Activated CD4-positive, alpha-beta T cell treated with anti-CD3 and anti-CD28 coated beads for 36 hours (primary cell): ENCODE measurements at regions of chr19 and their contacts with region 1.

Region 1: GRCh38 chr19:14136509-14137281 is at the start of gene ASF1B:
- DNase-seq: peak; percentile 99
- ATAC-seq: peak; percentile 88
- H3K4me3 Mint-ChIP-seq: peak within 1 kb of the TSS; percentile 88
- H3K27ac Mint-ChIP-seq: peak within 1 kb of the TSS; percentile 93
- H3K4me1 Mint-ChIP-seq: peaks cover 43% of the 10 kb centered on the region
- H3K27me3 Mint-ChIP-seq: no peaks in the 10 kb centered on the region
- total RNA-seq, gene ASF1B: 64.6 to 70.4 TPM

Region 2: GRCh38 chr19:13859361-13859880 is 277.3 kb before region 1 on chr19:
- CTCF ChIA-PET with region 1: no interaction called
- POLR2A ChIA-PET with region 1: no interaction called
- intact Hi-C with region 1: no loop called
- DNase-seq: no peak
- ATAC-seq: no peak
- H3K4me3 Mint-ChIP-seq: no peak overlapping the region
- H3K27ac Mint-ChIP-seq: peak overlapping the region; percentile 1
- H3K4me1 Mint-ChIP-seq: peaks cover 29% of the 10 kb centered on the region
- H3K27me3 Mint-ChIP-seq: peaks cover 13% of the 10 kb centered on the region

Region 3: DNA sequence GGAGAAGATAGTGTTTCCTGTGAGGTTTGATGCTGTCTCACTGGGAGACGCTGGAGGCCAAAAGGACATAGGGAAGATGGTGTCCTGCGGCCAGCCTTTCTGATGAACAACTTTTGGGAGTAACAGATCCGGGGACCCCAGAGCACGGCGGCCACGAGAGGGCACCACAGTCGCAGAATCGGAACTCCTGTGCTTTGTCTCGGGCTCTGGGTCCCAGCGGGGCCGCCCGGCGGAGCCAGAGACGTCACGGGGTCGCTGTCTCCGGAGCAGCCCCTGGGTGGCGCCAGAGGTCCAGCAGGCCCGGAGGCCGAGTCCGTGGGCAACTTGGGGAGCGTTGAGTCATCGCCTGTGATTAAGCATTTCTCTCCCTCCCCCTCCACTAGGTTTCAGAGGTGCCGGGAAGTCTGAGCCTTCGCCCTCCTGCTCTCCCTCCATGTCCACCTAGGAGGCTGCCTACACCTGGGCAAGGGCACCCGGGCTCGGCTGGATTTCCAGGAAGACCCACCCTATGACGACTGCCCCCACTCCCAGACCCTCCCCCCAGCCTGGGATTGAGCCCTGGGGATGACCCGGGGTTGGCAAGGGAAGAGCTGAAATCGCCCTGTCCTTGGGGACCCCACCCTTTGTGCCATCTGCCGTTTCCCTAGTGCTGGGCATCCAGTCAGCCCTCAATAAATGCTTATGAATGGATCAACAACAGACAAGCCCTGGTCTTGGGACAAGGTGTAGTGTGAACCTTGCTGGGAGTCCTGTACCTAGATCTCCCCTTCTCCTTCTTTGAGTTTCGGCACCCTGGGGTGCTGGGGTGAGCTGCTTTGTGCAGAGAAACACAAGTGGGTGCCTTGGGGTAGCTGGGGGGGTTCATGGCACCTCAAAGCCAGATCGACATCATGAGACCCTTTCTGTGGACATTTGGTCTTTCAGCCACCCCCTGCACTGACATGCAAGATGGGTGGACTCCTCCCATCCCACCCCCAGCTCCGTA is 256.3 kb before region 1 on chr19:
- CTCF ChIA-PET with region 1: interaction called, 7 read pairs
- POLR2A ChIA-PET with region 1: interaction called, 3 read pairs
- intact Hi-C with region 1: loop called (anchors 1 to 2 kb)
- DNase-seq: peak; percentile 99
- ATAC-seq: peak; percentile 94
- H3K4me3 Mint-ChIP-seq: peak overlapping the region; percentile 49
- H3K27ac Mint-ChIP-seq: peak overlapping the region; percentile 85
- H3K4me1 Mint-ChIP-seq: peaks cover 35% of the 10 kb centered on the region
- H3K27me3 Mint-ChIP-seq: no peaks in the 10 kb centered on the region

Region 4: DNA sequence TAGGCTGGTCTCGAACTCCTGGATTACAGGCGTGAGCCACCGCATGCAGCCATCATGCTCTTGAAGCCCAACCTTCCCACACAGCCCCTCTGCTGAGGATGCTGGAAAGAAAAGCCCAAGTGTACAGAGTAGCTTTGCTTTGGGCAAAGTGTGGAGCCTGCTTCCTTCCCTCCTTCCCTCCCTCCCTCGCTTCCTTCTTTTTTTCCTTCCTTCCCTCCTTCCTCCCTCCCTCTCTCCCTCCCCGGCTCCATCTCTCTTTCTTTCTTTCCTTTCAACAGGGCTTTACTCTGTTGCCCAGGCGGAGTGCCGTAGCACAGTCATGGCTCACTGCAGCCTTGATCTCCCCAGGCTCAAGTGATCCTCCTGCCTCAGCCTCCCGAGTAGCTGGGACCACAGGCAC is 228.0 kb before region 1 on chr19:
- CTCF ChIA-PET with region 1: no interaction called
- POLR2A ChIA-PET with region 1: no interaction called
- intact Hi-C with region 1: no loop called
- DNase-seq: no peak
- ATAC-seq: no peak
- H3K4me3 Mint-ChIP-seq: no peak overlapping the region
- H3K27ac Mint-ChIP-seq: no peak overlapping the region
- H3K4me1 Mint-ChIP-seq: peaks cover 14% of the 10 kb centered on the region
- H3K27me3 Mint-ChIP-seq: no peaks in the 10 kb centered on the region

Region 5: GRCh38 chr19:14081325-14082093 is 55.2 kb before region 1 on chr19:
- CTCF ChIA-PET with region 1: interaction called, 13 read pairs
- POLR2A ChIA-PET with region 1: interaction called, 3 read pairs
- intact Hi-C with region 1: loop called (anchors 1 to 2 kb)
- DNase-seq: peak; percentile 99
- ATAC-seq: peak; percentile 95
- H3K4me3 Mint-ChIP-seq: peak overlapping the region; percentile 90
- H3K27ac Mint-ChIP-seq: peak overlapping the region; percentile 92
- H3K4me1 Mint-ChIP-seq: peaks cover 10% of the 10 kb centered on the region
- H3K27me3 Mint-ChIP-seq: no peaks in the 10 kb centered on the region

Region 6: GRCh38 chr19:14237014-14237941 is 100.6 kb after region 1 on chr19:
- CTCF ChIA-PET with region 1: no interaction called
- POLR2A ChIA-PET with region 1: no interaction called
- intact Hi-C with region 1: no loop called
- DNase-seq: no peak
- ATAC-seq: no peak
- H3K4me3 Mint-ChIP-seq: no peak overlapping the region
- H3K27ac Mint-ChIP-seq: no peak overlapping the region
- H3K4me1 Mint-ChIP-seq: no peaks in the 10 kb centered on the region
- H3K27me3 Mint-ChIP-seq: no peaks in the 10 kb centered on the region

Region 7: DNA sequence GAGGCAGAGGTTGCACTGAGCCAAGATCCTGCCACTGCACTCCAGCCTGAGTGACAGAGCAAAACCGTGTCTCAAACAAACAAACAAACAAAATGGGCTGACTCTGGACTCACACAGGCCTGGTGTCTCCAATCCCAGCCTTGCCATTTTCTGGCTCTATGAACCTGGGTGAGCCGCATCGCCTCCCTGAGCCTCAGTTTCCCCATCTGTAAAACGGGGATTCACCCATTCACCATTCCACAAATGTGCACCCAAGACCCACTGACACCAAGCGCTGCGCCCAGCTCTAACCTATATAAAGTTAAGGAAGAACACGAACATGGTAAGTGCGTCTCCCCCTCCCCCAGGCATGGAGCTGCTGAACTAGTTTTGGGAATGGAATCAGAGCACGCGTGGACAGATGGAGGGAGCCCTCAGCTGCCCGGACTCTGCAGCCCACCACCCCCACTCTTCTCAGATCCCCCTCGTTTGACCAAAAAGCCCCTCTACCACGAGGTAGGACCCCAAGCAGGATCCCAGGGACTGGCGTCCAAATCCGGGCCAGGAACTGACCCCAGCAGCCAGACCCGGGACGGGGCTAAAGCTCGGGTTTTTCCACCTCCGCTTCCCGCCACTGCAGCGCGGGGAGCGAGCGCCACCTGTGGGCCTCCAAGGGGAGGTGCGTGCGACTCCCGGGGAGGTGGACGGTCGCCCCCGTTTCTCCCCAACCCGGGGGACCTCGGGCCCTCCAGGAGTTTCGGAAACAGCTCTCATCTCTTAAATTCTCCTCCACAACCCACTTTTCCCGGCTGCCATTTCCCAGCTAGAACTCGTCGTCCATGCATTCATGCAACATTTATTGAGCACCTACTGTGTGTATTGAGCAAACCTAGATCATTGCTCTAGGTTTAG is 211.5 kb after region 1 on chr19:
- CTCF ChIA-PET with region 1: interaction called, 21 read pairs
- POLR2A ChIA-PET with region 1: no interaction called
- intact Hi-C with region 1: loop called (anchors 1 to 5 kb)
- DNase-seq: peak; percentile 84
- ATAC-seq: peak; percentile 63
- H3K4me3 Mint-ChIP-seq: peak overlapping the region; percentile 56
- H3K27ac Mint-ChIP-seq: peak overlapping the region; percentile 80
- H3K4me1 Mint-ChIP-seq: peaks cover 24% of the 10 kb centered on the region
- H3K27me3 Mint-ChIP-seq: no peaks in the 10 kb centered on the region

Region 8: DNA sequence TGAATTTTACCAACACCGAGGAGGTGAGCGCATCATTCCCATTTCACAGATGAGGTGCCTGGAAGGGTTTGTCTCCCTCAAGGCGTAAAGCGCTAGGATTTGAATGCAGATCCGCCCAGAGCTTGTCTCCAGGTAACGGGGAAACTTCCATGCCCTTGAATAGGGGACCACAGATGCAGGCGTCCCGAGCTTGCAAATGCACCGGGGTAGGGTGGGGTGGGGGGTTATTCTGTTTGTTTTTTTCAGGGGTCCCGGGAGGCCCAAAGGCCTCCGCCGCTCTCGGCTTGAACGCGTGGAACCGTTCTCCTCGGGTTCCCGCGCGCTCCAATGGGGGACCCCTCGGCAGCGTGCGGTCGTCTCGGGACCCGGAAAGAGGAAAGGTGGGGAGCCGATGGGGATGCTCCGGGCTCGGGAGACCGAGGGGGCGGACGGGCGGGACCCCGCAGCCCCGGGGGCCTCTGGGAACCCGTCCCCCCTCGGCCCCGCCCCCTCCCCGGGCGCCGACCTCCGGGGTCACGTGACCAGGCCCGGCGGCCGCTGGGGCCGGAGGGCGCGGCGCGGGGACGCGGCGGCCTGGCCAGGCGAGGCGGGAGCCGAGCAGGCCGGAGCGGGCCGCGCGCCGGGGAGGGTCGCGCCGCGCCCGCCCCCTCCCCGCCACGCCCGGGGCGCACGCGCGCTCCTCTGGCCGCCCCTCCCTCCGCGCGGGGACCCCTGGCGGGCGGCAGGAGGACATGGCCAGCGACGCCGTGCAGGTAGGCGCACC is 296.3 kb after region 1 on chr19 and contains the start of gene PKN1:
- CTCF ChIA-PET with region 1: interaction called, 3 read pairs
- POLR2A ChIA-PET with region 1: interaction called, 3 read pairs
- intact Hi-C with region 1: loop called in 1 of 2 experiments (anchors 1 kb)
- DNase-seq: peak; percentile 75
- ATAC-seq: peak; percentile 11
- H3K4me3 Mint-ChIP-seq: peak within 1 kb of the TSS; percentile 73
- H3K27ac Mint-ChIP-seq: peak within 1 kb of the TSS; percentile 71
- H3K4me1 Mint-ChIP-seq: peaks cover 30% of the 10 kb centered on the region
- H3K27me3 Mint-ChIP-seq: no peaks in the 10 kb centered on the region
- total RNA-seq, gene PKN1: 173 to 176 TPM

Region 9: DNA sequence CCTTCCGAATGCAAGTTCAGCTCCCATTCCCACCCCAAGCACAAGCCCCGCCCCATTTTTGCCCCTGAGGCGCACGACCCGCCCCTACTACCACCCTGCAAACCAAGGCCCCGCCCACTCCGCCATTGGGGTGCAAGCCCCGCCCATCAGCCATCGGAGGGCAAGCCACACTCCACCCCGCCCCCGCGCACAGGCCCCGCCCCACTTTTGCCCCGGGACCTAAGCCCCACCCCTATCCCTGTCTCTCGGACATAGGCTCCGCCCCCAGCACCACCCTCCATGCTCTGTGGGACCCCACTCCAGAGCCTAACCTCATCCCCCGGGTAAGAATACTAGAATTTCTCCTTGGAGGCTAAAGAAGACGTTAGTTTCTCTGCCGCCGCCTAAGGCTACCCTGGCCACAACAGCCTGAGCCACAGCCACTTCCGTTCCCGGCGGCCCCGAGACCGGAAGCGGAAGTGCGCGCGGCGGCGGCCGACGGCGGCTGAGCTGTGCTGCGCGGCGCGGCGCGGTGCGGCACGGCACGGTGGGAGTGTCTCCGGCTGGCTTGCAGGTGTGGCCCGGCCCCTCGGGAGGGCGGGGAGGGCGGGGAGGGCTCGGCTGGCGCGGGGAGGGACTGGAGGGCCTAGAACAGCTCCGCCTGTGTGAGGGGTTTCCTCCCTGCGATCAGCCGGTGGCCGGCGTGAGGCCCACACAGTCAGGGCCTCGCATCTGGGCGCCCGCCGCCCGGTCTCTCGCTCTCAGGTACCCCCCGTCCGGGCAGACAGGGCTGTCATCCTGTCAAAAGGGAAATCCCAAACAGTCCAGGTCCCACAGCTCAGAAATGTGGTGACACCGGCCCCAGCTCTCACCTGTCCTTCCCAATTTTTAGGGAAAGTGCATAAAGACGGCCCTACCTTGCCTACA is 553.2 kb after region 1 on chr19 and contains the start of gene ZNF333:
- CTCF ChIA-PET with region 1: no interaction called
- POLR2A ChIA-PET with region 1: no interaction called
- intact Hi-C with region 1: loop called in 1 of 2 experiments (anchors 1 kb)
- DNase-seq: peak; percentile 100
- ATAC-seq: peak; percentile 94
- H3K4me3 Mint-ChIP-seq: peak within 1 kb of the TSS; percentile 79
- H3K27ac Mint-ChIP-seq: peak within 1 kb of the TSS; percentile 95
- H3K4me1 Mint-ChIP-seq: peaks cover 17% of the 10 kb centered on the region
- H3K27me3 Mint-ChIP-seq: no peaks in the 10 kb centered on the region
- total RNA-seq, gene ZNF333: 11.7 to 12.7 TPM